PC-9 (cell line): ENCODE measurements at regions of chr1 and their contacts with region 1.

Region 1: GRCh38 chr1:6099787-6100765 is 54.4 kb downstream of the KCNAB2 start:
- DNase-seq: peak in 1 of 2 experiments; percentile 43
- H3K4me3 ChIP-seq: no peak overlapping the region
- H3K27ac ChIP-seq: no peak overlapping the region
- H3K4me1 ChIP-seq: no peaks in the 10 kb centered on the region
- H3K27me3 ChIP-seq: peaks cover 13% of the 10 kb centered on the region; the same call in 1 of the 2 replicates
- CTCF ChIP-seq: peak; percentile 34; the same call in 1 of the 2 replicates

Region 2: GRCh38 chr1:5992026-5992813 is 107.9 kb before region 1 on chr1 and contains the start of gene NPHP4:
- CTCF ChIA-PET with region 1: no interaction called
- POLR2A ChIA-PET with region 1: no interaction called
- intact Hi-C with region 1: no loop called
- DNase-seq: peak; percentile 95 to 98
- H3K4me3 ChIP-seq: peak within 1 kb of the TSS; percentile 85
- H3K27ac ChIP-seq: no peak within 1 kb of the TSS
- H3K4me1 ChIP-seq: 0 out of 2 replicates have a peak, but pooled peaks cover 4% of the 10 kb centered on the region
- H3K27me3 ChIP-seq: no peaks in the 10 kb centered on the region
- CTCF ChIP-seq: no peak
- total RNA-seq, gene NPHP4: 17.9 and 21.5 TPM in 2 replicates

Region 3: GRCh38 chr1:6059866-6060265 is 40.2 kb before region 1 on chr1:
- CTCF ChIA-PET with region 1: interaction called, 8 read pairs
- POLR2A ChIA-PET with region 1: interaction called, 4 read pairs
- intact Hi-C with region 1: loop called (anchors 2 kb)
- DNase-seq: peak; percentile 44 to 65
- H3K4me3 ChIP-seq: no peak overlapping the region
- H3K27ac ChIP-seq: no peak overlapping the region
- H3K4me1 ChIP-seq: peaks cover 23% of the 10 kb centered on the region
- H3K27me3 ChIP-seq: no peaks in the 10 kb centered on the region
- CTCF ChIP-seq: no peak